Activated naive CD4-positive, alpha-beta T cell treated with anti-CD3 and anti-CD28 coated beads for 36 hours (primary cell): ENCODE measurements at regions of chr17 and their contacts with region 1.

Region 1: DNA sequence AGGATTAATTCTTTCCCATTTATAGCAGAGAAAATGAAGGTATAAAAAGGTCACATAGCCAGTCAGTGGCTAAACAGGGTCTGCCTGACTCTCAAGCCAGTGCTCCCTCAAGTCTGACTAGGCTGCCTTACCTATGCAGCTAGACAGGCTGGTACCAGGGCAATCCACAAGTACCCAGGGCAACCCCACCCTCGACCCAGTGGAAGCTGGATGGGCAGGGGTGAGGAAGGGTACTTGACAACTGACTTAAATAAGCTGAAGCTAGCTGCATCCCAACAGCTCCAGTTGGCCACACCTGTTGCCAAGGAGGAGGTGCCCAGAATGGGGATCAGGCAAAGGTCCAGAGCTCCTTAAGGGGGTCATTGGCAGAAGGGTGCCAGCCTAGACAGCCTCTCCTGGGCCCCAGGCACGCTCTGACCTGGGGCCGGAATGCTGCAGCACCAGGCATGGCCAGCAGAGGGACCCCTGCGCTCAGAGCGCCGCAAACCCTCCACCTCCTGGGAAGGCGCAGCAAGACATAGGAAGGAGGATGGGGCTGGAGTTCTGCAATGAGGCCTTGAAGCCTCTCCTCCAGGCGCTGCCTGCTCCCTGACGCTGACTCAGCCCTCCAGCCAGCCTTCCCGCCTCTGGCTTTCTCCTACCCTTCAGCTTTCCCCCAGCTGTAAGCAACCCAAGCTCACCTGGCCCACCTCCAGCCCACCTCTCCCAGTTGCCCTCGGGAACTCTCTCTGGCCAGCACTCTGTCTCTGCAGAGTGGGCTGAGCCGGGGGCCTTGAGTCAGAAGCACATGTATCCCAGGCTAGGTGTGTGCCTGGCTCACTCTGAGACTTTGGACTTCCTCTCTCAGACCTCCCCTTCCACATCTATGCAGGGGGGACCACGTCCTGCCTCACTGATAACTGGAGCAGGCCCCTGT is 28.8 kb downstream of the MPP2 start:
- DNase-seq: peak; percentile 75
- H3K4me3 Mint-ChIP-seq: no peak overlapping the region
- H3K27ac Mint-ChIP-seq: no peak overlapping the region
- H3K4me1 Mint-ChIP-seq: no peaks in the 10 kb centered on the region
- H3K27me3 Mint-ChIP-seq: no peaks in the 10 kb centered on the region

Region 2: GRCh38 chr17:43584666-43585102 is 293.8 kb before region 1 on chr17:
- CTCF ChIA-PET with region 1: no interaction called
- intact Hi-C with region 1: no loop called
- DNase-seq: no peak
- H3K4me3 Mint-ChIP-seq: no peak overlapping the region
- H3K27ac Mint-ChIP-seq: no peak overlapping the region
- H3K4me1 Mint-ChIP-seq: no peaks in the 10 kb centered on the region
- H3K27me3 Mint-ChIP-seq: no peaks in the 10 kb centered on the region

Region 3: DNA sequence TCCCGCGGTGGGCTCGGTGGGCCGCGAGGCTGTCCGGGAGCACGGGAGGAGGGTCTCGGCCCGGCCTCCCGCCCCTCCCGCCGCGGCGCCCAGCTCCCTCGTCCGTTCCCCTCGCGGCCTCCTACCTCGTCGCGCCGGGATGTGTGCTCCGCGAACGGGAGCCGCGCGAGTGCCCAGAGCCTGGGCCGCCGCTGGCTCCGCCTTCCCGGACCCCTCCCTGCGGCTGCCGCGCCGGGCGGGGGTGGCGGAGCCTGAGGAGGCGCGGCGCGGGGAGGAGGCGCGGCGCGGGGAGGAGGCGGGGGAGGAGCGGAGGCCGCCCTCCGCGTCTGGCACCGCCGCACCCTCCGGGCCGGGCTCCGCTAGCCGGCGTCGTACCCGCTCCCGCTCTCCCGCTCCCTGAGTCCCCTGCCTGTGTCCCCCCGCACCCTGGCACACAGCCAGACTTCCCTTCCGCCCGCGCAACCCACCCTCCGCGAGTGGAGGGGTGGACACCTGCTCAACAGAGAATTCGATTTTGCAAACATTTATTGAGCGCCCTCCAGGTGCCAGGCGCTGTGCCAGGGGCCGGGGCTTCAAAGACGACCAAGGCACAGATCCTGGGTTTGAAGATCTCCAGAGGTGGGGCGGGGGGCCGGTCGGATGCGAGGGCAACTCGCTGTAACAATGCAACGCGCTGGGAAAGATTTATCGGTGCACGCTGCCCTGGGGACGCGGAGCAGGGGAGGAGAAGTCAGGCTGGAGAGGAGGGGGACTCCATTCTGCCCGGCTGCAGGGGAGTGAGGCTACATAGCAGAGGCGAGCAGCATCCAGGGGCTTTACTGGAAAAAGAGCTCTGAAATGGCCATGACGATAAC is 45.3 kb before region 1 on chr17 and contains the start of gene MPP3:
- CTCF ChIA-PET with region 1: no interaction called
- intact Hi-C with region 1: no loop called
- DNase-seq: peak; percentile 34
- H3K4me3 Mint-ChIP-seq: peak within 1 kb of the TSS; percentile 72
- H3K27ac Mint-ChIP-seq: no peak within 1 kb of the TSS
- H3K4me1 Mint-ChIP-seq: peaks cover 15% of the 10 kb centered on the region
- H3K27me3 Mint-ChIP-seq: peaks cover 28% of the 10 kb centered on the region
- total RNA-seq, gene MPP3: 0.30 to 0.33 TPM

Region 4: DNA sequence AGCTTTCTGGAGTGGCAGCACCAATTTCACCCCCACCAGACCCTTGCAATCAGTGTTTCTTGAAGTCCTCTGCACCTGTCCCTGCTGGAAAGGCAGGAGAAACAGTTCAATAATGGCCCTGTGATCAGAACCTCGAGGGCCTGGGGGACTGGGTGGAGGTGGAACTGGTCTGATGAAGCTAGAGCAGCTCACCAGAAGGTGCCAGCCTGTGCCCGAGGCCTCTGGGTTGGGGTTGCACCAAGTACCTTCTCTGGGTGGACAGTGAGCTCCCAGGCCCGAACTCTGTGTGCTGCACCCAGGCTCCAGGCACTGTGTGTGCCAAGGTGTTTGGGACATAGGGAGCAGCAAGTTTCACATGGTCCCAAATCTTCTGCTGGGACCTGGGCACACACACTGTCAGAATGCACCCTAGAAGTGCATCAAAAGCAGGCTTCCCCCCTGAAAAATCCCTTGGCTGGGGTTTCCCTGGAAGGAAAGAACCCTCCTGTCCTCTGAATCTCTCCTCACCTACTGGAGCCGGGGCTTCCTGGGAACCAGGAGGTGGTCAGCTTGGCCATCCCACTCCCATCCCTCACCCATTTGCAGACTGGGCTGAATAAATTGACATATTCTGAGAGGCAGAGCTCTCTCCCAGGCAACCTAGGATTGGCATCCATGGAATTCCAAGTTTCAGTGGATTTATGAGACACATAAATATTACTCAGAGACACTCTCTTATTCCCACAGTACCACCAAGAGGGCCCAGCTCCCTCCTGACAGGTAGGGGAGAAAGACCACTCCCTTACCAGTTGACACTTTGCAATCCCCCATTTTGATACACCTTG is 14.1 kb before region 1 on chr17:
- CTCF ChIA-PET with region 1: interaction called, 17 read pairs
- intact Hi-C with region 1: no loop called
- DNase-seq: no peak
- H3K4me3 Mint-ChIP-seq: no peak overlapping the region
- H3K27ac Mint-ChIP-seq: no peak overlapping the region
- H3K4me1 Mint-ChIP-seq: no peaks in the 10 kb centered on the region
- H3K27me3 Mint-ChIP-seq: peaks cover 7% of the 10 kb centered on the region

Region 5: DNA sequence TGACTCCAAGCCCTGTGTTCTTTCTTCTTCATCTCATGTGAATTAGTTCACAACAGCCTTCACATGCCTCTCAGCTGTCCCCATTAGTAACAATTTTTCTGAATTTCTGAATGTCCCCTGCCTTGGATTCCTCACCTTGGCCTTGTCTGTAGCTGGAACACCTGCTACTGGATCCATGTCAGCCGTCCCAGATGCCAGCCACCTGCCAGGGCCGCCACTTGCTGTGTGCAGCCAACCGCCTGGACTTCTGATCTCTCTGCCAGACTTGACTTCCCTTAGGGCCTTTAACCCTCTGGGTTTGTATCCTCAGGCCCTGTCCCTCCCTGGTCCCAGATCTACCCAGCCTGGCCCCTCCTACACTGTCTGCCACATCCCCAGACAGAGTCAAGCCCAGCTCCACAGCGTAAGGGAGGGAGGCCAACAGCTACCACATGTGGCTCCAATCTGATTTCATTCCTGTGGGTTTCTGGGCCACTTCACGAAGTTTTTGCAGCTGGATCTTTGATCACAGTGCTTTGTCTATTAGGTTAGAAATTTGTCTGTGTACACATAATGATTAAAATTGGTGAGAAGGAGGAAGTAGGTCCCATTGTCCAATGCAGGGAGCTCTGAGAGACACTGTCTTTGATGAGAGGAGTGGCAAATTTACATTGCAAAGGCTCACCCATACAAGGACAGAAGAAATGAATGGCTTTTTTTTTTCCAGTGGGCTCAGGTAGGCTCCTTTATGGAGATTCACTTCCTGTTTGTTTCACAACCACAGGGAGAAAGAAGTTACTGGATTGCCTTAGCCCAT is 13.5 kb after region 1 on chr17:
- CTCF ChIA-PET with region 1: interaction called, 28 read pairs
- intact Hi-C with region 1: no loop called
- DNase-seq: no peak
- H3K4me3 Mint-ChIP-seq: no peak overlapping the region
- H3K27ac Mint-ChIP-seq: no peak overlapping the region
- H3K4me1 Mint-ChIP-seq: no peaks in the 10 kb centered on the region
- H3K27me3 Mint-ChIP-seq: no peaks in the 10 kb centered on the region

Region 6: DNA sequence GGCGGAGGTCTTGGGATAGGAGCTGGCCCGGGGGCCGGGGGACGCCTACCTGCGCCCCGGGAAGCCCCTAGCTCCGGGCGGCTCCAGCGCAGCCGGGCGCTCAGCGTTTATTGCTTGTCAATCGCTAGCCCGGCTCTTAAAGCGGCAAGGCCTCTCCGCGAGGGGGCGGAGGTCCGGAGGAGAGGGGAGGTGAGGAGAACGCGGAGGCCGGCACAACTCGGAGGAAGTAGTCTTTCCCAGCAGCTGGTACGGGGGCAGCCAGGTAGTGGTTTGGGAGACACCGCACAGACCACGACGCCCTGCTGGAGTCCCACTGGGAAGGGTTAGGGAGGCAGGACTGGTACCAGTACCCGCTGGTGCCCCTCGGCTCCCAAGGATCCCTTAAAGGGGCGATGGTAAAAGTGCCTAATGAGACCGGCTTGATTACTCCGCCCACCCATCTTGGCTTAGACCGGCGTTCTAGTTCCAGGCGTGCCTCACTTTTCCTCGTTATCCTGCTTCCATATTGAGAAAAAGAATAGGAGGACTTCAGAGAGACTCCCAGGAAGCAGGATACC is 29.0 kb after region 1 on chr17 and contains the start of gene MPP2:
- CTCF ChIA-PET with region 1: interaction called, 31 read pairs
- intact Hi-C with region 1: no loop called
- DNase-seq: peak; percentile 64
- H3K4me3 Mint-ChIP-seq: peak within 1 kb of the TSS; percentile 63
- H3K27ac Mint-ChIP-seq: no peak within 1 kb of the TSS
- H3K4me1 Mint-ChIP-seq: peaks cover 18% of the 10 kb centered on the region
- H3K27me3 Mint-ChIP-seq: peaks cover 4% of the 10 kb centered on the region
- total RNA-seq, gene MPP2: 2.3 to 2.5 TPM

Region 7: GRCh38 chr17:43946069-43946696 is 67.7 kb after region 1 on chr17:
- CTCF ChIA-PET with region 1: interaction called, 10 read pairs
- intact Hi-C with region 1: loop called (anchors 2 kb)
- DNase-seq: peak; percentile 39
- H3K4me3 Mint-ChIP-seq: no peak overlapping the region
- H3K27ac Mint-ChIP-seq: no peak overlapping the region
- H3K4me1 Mint-ChIP-seq: peaks cover 11% of the 10 kb centered on the region
- H3K27me3 Mint-ChIP-seq: peaks cover 9% of the 10 kb centered on the region

Region 8: GRCh38 chr17:43994272-43995149 is 116.0 kb after region 1 on chr17:
- CTCF ChIA-PET with region 1: interaction called, 18 read pairs
- intact Hi-C with region 1: loop called (anchors 1 kb)
- DNase-seq: peak; percentile 75
- H3K4me3 Mint-ChIP-seq: peak overlapping the region; percentile 39
- H3K27ac Mint-ChIP-seq: no peak overlapping the region
- H3K4me1 Mint-ChIP-seq: peaks cover 3% of the 10 kb centered on the region
- H3K27me3 Mint-ChIP-seq: peaks cover 8% of the 10 kb centered on the region